Activated CD4-positive, alpha-beta T cell treated with anti-CD3 and anti-CD28 coated beads, Interleukin-2, amount 10 ng/mL, durations not matched to agents 7 days and 5 days (primary cell): ENCODE measurements at regions of chr17 and their contacts with region 1.

Region 1: DNA sequence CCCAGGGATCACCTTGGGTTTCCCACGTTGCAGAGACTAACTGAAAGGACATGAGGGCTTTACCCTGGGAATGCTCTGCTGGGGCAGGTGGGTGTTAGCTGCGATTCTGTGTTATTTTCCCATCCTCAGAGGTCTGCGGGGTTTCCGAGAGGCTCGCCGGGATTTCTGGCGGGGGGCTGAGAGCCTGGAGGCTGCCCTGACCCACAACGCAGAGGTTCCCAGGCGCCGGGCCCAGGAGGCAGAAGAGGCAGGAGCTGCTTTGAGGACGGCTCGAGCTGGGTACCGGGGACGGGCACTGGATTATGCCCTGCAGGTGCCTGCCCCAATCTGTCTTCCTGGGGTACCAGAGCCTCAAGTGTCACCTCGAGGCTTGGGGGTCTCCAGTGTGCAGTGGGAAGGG is 6.9 kb downstream of the ACAP1 start:
- DNase-seq: no peak
- H3K4me3 Mint-ChIP-seq: no peak overlapping the region
- H3K27ac Mint-ChIP-seq: no peak overlapping the region
- H3K4me1 Mint-ChIP-seq: peaks cover 37% of the 10 kb centered on the region
- H3K27me3 Mint-ChIP-seq: no peaks in the 10 kb centered on the region

Region 2: GRCh38 chr17:7329374-7329996 is 13.8 kb before region 1 on chr17:
- CTCF ChIA-PET with region 1: interaction called, 19 read pairs
- POLR2A ChIA-PET with region 1: no interaction called
- DNase-seq: peak; percentile 97
- H3K4me3 Mint-ChIP-seq: peak overlapping the region; percentile 87
- H3K27ac Mint-ChIP-seq: peak overlapping the region; percentile 98
- H3K4me1 Mint-ChIP-seq: peaks cover 57% of the 10 kb centered on the region
- H3K27me3 Mint-ChIP-seq: no peaks in the 10 kb centered on the region